ENCODE measurements at regions of chr10 and their contacts with region 1.

Region 1: GRCh38 chr10:59019603-59020002 is 156.8 kb upstream of the PHYHIPL start:
- DNase-seq: no peak
- H3K4me3 ChIP-seq: peak overlapping the region in 52 of 59 donors; percentile 0 to 55 (median 24)
- H3K27ac ChIP-seq: peak overlapping the region; percentile 73 to 99 (median 92)
- H3K27me3 ChIP-seq: no peaks in the 10 kb centered on the region
- CTCF ChIP-seq: peak in 2 of 56 donors; percentile 4 to 11

Region 2: DNA sequence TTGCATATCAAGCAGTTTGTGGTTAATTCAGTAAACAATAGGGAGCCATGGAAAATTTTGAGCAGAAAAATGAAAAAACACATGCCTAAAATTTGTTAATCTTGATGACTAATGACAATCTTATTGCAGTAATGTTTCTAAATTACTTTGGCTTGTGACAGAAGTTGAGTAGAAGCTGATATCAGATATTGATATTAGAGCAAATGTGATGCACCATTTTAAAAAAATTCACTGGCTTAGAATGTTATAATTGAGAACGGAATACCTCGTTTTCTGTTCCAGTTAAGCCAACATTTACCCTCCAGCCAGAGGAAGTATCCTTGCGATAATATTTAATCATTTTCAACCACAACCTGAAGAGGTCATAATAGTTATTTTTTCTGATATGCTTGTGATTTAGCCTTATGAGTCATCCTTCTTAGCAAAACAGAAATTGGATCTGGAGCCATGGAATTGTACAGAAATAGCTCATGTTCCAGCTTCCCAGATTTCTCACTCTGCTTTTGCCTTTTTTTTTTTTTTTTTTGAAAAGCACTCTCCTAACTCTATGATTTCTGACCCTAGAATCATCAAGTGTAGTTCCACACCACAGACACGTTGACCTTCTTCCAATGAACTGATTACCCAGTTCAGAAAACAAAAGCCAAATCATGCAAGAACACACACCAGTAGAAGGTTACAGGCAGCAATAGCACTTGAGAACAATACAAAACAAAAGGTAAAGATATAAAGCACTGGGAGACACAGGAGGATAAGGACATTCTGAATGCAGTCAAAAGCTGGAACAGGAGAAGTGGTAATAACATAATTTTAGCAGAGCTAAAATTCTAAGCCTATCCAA is 60.0 kb after region 1 on chr10:
- intact Hi-C with region 1: loop called in 1 of 2 experiments (anchors 10 kb)
- DNase-seq: no peak
- H3K4me3 ChIP-seq: no peak overlapping the region
- H3K27ac ChIP-seq: peak overlapping the region in 58 of 59 donors; percentile 4 to 87 (median 68)
- H3K27me3 ChIP-seq: no peaks in the 10 kb centered on the region
- CTCF ChIP-seq: no peak

Region 3: GRCh38 chr10:59303018-59303417 is 283.4 kb after region 1 on chr10:
- intact Hi-C with region 1: no loop called
- DNase-seq: no peak
- H3K4me3 ChIP-seq: peak overlapping the region in 3 of 59 donors; percentile 6 to 35 (median 13)
- H3K27ac ChIP-seq: peak overlapping the region in 57 of 59 donors; percentile 17 to 98 (median 76)
- H3K27me3 ChIP-seq: no peaks in the 10 kb centered on the region
- CTCF ChIP-seq: no peak

Measured in dorsolateral prefrontal cortex (tissue), 120 donors.